HEK293 (cell line): ENCODE measurements at regions of chr12 and their contacts with region 1.

Region 1: DNA sequence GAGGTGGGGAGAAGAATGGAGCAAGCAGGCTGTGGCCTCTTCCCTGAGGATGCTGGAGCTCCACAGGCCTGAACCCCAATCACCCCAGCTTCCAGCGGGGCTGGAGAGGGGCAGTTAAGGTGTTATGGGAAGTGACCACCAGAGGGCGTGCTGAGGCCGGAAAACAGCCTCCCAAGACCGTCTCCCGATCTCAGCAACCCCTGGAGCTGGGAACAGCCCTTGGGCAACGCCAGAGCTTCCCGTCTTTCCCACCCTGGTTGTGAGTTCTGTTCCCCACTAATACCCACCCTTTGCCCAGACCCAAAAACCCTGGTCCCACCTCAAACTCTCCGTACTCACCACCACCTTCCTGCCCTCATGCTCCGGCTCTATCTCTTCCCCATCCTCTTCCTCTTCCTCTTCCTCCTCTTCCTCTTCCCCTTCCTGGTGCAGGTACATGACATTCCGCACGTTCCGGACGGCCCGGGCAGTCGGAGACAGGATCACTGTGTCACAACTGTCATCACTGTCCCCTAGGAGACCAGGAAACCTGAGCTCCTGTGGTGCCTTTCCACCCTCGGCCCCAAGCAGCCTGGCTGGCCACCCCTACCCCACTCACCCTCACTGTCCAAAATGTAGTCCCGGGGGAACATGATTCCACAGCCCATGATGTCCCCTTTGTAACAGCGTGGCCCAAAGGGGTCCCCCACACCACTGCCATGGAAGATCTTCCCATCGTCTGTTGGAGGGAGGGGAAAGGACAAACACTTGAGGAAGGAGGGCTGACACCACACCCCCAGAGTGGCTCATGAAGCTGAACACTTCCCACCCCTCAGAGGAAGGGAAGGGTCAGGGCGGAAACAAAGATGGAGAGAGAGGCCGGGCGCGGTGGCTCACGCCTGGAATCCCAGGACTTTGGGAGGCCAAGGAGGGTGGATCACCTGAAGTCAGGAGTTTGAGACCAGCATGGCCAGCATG is 12.9 kb downstream of the SPRYD3 start:
- H3K4me3 ChIP-seq: no peak overlapping the region
- H3K27ac ChIP-seq: no peak overlapping the region
- H3K4me1 ChIP-seq: peaks cover 4% of the 10 kb centered on the region
- CTCF ChIP-seq: peak; percentile 91

Region 2: GRCh38 chr12:52794479-52795331 is 271.5 kb before region 1 on chr12:
- CTCF ChIA-PET with region 1: no interaction called
- POLR2A ChIA-PET with region 1: no interaction called
- H3K4me3 ChIP-seq: no peak overlapping the region
- H3K27ac ChIP-seq: no peak overlapping the region
- H3K4me1 ChIP-seq: no peaks in the 10 kb centered on the region
- CTCF ChIP-seq: no peak

Region 3: DNA sequence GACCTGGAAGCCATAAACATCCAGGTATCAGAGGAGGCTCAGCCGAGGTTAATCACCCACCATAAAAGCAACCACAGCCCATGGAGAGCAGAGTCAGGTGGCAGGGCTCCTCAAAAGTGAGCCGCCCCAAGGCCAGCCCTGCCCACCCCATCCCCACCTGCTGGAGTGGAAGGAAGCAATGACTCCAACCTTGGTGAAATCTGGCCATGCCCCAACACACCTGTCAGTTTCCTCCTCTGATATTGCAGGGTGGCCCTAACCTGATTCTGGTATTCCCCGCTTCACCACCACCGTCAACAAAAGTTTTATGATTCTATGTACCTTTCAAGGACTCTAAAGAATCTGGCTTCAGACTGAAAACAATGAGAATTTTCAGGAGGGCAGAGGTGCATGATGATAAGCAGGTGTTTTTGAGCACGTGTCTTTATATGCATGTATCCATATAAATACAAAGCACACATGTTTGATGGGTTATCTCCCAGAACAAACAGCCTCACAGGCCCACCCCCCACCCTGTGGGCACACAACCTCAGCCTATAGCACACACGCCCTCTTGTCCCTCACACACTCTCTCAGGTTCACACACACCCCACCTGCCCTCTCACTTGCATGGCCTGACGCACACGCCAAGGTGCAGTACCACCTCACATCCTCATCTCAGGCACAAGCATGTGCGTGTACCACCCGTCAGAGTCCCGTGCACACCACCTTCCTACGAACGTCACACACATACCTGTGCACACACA is 153.0 kb before region 1 on chr12:
- CTCF ChIA-PET with region 1: no interaction called
- POLR2A ChIA-PET with region 1: no interaction called
- H3K4me3 ChIP-seq: no peak overlapping the region
- H3K27ac ChIP-seq: no peak overlapping the region
- H3K4me1 ChIP-seq: no peaks in the 10 kb centered on the region; the same call in 1 of the 2 replicates
- CTCF ChIP-seq: no peak

Region 4: DNA sequence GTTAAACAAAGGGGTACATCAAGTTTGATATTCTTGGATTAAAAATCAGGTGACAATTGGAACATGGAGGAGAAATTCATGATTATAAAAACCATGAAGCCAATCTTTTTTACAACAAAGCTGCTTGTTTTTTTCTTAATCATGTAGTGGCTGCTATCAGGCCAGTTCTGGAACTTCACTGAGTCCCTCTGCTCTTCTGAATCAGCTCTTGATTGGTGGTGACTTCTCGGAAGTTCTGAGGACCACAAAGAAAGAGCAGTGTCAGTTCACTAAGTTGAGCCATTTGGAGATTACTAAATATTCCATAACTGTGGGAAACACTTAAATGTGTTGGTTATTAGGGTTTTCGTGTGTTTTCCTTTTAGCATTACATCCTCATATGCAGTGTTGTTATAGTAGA is 51.5 kb before region 1 on chr12:
- CTCF ChIA-PET with region 1: no interaction called
- POLR2A ChIA-PET with region 1: no interaction called
- H3K4me3 ChIP-seq: no peak overlapping the region
- H3K27ac ChIP-seq: no peak overlapping the region
- H3K4me1 ChIP-seq: peaks cover 3% of the 10 kb centered on the region; the same call in 1 of the 2 replicates
- CTCF ChIP-seq: no peak

Region 5: DNA sequence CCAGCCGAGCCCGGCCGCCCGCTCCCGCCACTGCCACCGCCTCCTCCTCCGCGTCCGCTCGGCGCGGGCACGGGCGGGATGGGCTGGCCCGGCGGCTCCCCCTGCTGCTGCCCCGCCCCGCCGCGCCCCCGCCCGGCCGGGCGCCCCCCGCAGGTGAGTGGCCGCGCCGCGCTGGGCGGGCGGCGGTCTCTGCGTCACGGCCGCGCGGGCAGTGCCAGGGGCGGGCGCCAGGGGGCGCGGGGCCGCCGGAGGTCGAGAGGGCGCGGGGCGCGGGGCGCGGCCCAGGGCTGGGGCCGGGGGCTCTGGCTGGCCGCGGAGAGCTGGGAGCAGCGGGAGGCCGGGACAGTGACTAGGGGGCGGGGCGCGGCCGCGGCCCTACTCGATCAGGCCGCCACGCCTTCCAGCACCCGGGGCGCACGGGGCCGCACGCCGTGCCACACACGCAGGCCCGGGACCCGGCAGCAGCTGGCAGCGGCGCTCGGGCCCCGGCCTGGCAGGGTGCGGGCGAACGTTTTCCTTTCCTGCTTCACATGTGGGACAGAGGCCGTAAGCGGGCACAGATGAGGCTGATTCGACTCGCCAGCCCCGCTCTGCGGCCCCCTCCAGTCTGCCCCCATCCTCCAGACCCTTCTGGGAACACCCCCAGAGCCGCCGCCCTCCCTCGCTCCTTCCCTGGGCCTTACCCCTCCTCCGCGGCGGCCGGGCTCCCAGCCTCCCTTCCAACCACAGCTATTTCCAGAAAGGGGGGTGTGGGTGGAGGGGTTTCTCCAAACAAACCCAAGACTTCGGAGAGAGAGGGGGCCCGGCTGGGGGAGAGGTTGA is 18.8 kb before region 1 on chr12:
- CTCF ChIA-PET with region 1: interaction called, 10 read pairs
- POLR2A ChIA-PET with region 1: no interaction called
- H3K4me3 ChIP-seq: peak overlapping the region; percentile 65
- H3K27ac ChIP-seq: peak overlapping the region; percentile 84; the same call in 1 of the 2 replicates
- H3K4me1 ChIP-seq: peaks cover 32% of the 10 kb centered on the region
- CTCF ChIP-seq: no peak

Region 6: GRCh38 chr12:53079226-53080117 is 13.2 kb after region 1 on chr12 and contains the start of gene SPRYD3:
- CTCF ChIA-PET with region 1: interaction called, 78 read pairs
- POLR2A ChIA-PET with region 1: interaction called, 18 read pairs
- H3K4me3 ChIP-seq: peak within 1 kb of the TSS; percentile 55
- H3K27ac ChIP-seq: peak within 1 kb of the TSS; percentile 85
- H3K4me1 ChIP-seq: peaks cover 2% of the 10 kb centered on the region; the same call in 1 of the 2 replicates
- CTCF ChIP-seq: no peak

Region 7: GRCh38 chr12:53098982-53099651 is 32.9 kb after region 1 on chr12:
- CTCF ChIA-PET with region 1: interaction called, 264 read pairs
- POLR2A ChIA-PET with region 1: interaction called, 17 read pairs
- H3K4me3 ChIP-seq: no peak overlapping the region
- H3K27ac ChIP-seq: no peak overlapping the region
- H3K4me1 ChIP-seq: peaks cover 3% of the 10 kb centered on the region; the same call in 1 of the 2 replicates
- CTCF ChIP-seq: peak; percentile 87

Region 8: DNA sequence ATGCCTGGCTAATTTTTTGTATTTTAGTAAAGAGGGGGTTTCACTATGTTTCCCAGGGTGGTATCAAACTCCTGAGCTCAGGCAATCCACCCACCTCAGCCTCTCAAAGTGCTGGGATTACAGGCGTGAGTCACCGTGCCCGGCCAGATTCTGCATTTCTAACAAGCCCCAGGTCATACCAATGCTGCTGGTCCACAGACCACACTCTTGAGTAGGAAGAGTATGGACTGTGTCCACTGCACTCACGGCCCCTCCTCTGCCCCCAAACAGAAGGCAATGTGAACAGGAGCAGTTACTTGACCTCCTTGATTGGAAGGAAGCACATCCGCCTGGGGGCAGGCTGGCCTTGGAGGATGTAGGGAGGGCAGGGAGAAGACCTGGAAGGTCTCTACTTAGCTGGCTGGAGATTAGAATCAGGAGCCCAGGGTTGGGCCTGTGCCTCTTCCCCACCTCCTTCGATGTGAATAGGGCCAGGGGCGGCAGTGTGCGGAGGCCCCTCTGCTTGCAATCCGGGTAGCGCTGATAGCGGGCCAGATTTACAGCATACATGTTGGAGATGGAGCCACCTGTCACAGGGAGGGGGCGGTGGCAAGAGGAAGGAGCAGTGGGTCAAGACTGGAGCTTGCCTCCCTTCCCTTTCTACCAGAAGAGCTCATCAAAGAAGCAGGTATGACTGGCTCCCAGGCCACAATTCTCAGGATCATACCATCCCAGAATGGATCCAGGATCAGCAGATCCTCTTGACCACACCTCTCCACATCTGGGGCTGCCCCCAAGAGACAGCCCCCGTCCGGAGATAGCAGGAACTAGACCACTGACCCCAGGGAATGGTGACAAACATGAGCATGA is 104.8 kb after region 1 on chr12:
- CTCF ChIA-PET with region 1: no interaction called
- POLR2A ChIA-PET with region 1: no interaction called
- H3K4me3 ChIP-seq: no peak overlapping the region
- H3K27ac ChIP-seq: no peak overlapping the region; the same call in 1 of the 2 replicates
- H3K4me1 ChIP-seq: peaks cover 14% of the 10 kb centered on the region
- CTCF ChIP-seq: no peak

Region 9: GRCh38 chr12:53198486-53199110 is 132.3 kb after region 1 on chr12:
- CTCF ChIA-PET with region 1: interaction called, 15 read pairs
- POLR2A ChIA-PET with region 1: no interaction called
- H3K4me3 ChIP-seq: no peak overlapping the region
- H3K27ac ChIP-seq: no peak overlapping the region
- H3K4me1 ChIP-seq: no peaks in the 10 kb centered on the region
- CTCF ChIP-seq: no peak